ENCODE measurements at regions of chr7 and their contacts with region 1.

Region 1: DNA sequence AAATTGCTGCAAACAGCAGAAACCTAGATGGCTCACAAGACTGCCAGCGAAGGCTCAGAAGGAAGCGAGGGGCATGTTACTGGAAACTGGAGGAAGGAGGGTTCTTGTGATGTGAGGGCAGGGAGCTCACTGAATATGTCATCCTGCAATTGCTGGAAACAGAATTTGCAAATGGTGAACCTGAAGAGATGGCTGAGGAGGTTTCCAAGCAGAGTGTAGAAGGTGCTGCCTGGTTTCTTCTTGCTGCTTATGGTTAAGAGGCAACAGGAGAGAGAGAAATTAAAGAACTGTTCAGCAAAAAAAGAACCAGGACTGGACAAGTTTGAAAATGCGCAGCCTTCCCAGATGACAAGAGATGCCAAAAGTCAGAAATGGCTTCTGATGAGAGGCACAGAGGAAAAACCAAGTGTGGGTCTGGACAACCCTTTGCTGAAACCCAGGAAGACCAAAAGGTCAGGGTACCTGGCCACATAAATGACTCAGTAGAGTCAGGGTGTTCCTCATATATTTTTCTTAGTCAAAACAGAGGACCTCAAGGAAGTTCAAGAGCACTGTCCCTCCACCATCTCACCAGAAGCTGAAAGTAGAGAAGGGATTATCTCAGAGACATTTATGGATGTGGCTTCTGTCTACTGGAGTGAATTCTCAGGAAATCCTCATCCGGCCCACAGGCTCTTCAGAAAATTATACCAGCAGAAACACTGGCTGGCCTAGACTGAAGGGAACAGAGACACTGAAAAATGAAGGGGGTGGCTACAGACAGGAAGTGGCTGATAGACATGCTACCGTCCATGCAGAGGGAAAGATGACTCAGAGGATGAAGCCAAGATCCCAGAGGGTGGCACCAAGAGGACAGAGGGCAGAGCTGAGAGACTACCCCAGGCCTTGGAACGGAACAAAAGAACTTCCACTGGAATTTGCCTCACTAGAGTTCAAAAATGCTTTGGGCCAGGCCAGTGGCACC is 10.1 kb downstream of the PAPOLB start:
- DNase-seq: no peak
- H3K4me3 ChIP-seq: no peak overlapping the region
- H3K27ac ChIP-seq: no peak overlapping the region
- H3K4me1 ChIP-seq: no peaks in the 10 kb centered on the region
- H3K27me3 ChIP-seq: no peaks in the 10 kb centered on the region
- CTCF ChIP-seq: no peak
- POLR2A ChIP-seq: no peak

Region 2: DNA sequence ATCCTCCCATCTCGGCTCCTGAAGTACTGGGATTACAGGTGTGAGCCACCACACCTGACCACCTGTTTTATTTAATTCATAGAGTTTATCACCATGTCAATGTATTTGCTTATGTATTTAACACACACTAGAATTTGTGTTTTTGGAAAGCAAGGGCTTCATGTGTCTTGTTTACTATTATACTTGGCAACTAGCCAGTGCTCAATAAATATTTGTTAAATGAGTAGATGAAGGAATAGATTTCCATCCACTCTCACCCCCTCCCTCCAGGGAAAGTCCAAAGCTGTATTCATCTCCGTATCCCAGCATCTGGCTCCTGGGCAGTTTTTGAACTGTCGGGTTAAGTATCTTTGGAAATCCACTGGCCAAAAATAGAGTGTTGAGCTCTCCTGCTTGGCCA is 36.4 kb after region 1 on chr7:
- intact Hi-C with region 1: loop called (anchors 5 kb)
- DNase-seq: no peak
- H3K4me3 ChIP-seq: no peak overlapping the region
- H3K27ac ChIP-seq: no peak overlapping the region
- H3K4me1 ChIP-seq: peaks cover under 1 to 2% of the 10 kb centered on the region in 2 donors
- H3K27me3 ChIP-seq: no peaks in the 10 kb centered on the region
- CTCF ChIP-seq: no peak
- POLR2A ChIP-seq: no peak